Activated T-helper 1 cell treated with anti-CD3 and anti-CD28 coated beads, Interleukin-12 subunit alpha, Interleukin-12 subunit beta, Interleukin-2, Interleukin-4 antibody, amounts not matched to agents 30 ng/mL and 10 ng/mL and 1 ng/mL, durations not matched to agents 14 hours and 24 hours and 36 hours (primary cell): ENCODE measurements at regions of chr6 and their contacts with region 1.

Region 1: DNA sequence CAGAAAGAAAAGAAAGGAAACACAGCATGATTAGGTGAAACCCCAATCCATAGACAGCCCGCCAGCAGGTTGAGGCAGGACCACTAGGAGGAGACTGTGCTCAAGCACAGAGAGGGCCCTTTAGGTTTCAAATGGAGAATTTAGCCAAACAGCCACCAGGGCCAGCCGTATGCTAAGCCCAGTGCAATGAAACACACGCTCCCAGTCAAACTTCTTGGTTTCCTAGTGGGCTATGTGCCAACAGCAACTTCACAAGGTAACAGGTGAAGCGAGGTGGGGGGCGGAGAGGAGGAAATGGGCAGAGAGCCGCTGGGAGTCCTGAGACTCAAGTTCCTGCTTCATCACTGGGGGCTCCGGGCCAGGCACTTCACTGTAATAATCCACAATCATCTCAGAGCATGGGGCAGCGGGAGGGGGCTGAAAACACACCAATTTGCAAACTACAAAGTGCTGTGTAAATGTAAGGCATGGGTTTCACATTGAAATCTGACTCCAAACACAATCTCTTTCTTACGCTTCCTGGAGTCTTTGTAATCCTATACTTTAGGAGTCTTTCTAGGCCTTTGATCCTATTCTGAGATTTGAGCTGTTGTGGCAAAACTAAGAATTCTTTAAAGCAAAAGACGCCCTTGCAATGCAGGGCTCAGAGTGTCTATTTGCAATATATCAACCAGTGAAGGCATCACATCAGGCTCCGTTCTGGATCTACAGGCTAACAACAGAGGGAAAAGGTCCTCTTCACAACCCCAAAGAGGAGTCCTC is 117.3 kb downstream of the OPRM1 start:
- DNase-seq: peak; percentile 26
- H3K4me3 Mint-ChIP-seq: peak overlapping the region; percentile 43
- H3K27ac Mint-ChIP-seq: peak overlapping the region; percentile 84
- H3K4me1 Mint-ChIP-seq: peaks cover 26% of the 10 kb centered on the region
- H3K27me3 Mint-ChIP-seq: peaks cover 5% of the 10 kb centered on the region

Region 2: GRCh38 chr6:154206996-154207395 is 50.7 kb after region 1 on chr6:
- intact Hi-C with region 1: no loop called
- DNase-seq: no peak
- H3K4me3 Mint-ChIP-seq: no peak overlapping the region
- H3K27ac Mint-ChIP-seq: no peak overlapping the region
- H3K4me1 Mint-ChIP-seq: peaks cover 6% of the 10 kb centered on the region
- H3K27me3 Mint-ChIP-seq: no peaks in the 10 kb centered on the region

Region 3: GRCh38 chr6:154247119-154247861 is 91.0 kb after region 1 on chr6:
- intact Hi-C with region 1: loop called (anchors 1 kb)
- DNase-seq: no peak
- H3K4me3 Mint-ChIP-seq: peak overlapping the region; percentile 85
- H3K27ac Mint-ChIP-seq: peak overlapping the region; percentile 76
- H3K4me1 Mint-ChIP-seq: peaks cover 87% of the 10 kb centered on the region
- H3K27me3 Mint-ChIP-seq: no peaks in the 10 kb centered on the region

Region 4: DNA sequence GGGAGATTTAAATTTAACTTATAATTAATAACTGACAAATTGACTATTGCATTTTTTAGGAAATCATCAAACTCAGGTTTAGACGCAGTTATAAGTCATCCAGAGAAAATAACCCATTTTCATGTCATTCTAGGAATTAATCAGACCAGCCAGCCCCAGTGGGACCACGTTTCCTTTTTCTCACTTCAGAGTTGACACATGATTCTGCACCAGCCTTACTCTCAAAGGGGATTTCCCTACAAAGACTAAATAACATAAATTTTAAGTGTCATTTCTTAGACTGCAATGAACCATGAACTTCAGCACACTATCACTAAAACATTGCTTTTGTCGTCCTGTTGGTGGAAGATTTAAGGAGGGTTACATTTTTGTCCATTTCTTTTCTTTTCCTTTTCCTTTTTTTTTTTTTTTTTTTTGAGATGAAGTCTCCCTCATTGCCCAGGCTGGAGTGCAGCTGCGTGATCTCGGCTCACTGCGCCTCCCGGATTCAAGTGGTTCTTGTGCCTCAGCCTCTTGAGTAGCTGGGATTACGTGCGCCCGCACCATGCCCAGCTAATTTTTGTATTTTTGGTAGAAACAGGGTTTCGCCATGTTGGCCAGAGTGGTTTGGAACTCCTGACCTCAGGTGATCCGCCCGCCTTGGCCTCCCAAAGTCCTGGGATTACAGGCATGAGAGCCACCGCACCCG is 196.7 kb after region 1 on chr6:
- intact Hi-C with region 1: loop called (anchors 2 kb)
- DNase-seq: no peak
- H3K4me3 Mint-ChIP-seq: no peak overlapping the region
- H3K27ac Mint-ChIP-seq: no peak overlapping the region
- H3K4me1 Mint-ChIP-seq: peaks cover 20% of the 10 kb centered on the region
- H3K27me3 Mint-ChIP-seq: peaks cover 19% of the 10 kb centered on the region

Region 5: DNA sequence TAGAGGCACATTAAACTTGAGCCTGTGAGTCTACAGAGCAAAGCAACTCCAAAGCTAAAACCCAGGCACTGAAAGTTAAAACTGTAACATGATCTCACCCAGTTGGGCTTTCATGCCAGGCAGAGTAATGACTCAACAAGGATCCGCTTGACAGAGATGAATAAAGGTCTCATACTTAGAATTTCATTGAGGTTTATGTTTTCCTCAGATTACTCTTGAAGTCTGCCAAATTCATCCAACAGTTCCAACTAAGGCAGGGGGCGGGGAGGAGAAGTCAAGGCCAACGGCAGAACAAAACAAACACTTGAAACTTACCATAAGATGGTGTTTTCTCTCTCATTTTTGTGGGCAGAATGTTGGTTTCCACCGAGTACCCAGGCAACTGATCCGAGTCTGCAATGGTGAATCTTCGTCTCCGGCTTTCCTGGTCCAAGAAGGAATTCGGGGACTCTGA is 254.3 kb after region 1 on chr6:
- intact Hi-C with region 1: loop called (anchors 1 kb)
- DNase-seq: no peak
- H3K4me3 Mint-ChIP-seq: no peak overlapping the region
- H3K27ac Mint-ChIP-seq: peak overlapping the region; percentile 15
- H3K4me1 Mint-ChIP-seq: peaks cover 6% of the 10 kb centered on the region
- H3K27me3 Mint-ChIP-seq: peaks cover 6% of the 10 kb centered on the region

Region 6: GRCh38 chr6:154606457-154606856 is 450.1 kb after region 1 on chr6:
- intact Hi-C with region 1: loop called (anchors 2 kb)
- DNase-seq: peak; percentile 66
- H3K4me3 Mint-ChIP-seq: peak overlapping the region; percentile 65
- H3K27ac Mint-ChIP-seq: peak overlapping the region; percentile 86
- H3K4me1 Mint-ChIP-seq: peaks cover 24% of the 10 kb centered on the region
- H3K27me3 Mint-ChIP-seq: peaks cover 3% of the 10 kb centered on the region

Region 7: GRCh38 chr6:154733012-154733625 is 576.8 kb after region 1 on chr6 and contains the start of gene SCAF8:
- intact Hi-C with region 1: loop called (anchors 1 kb)
- DNase-seq: peak; percentile 85
- H3K4me3 Mint-ChIP-seq: peak within 1 kb of the TSS; percentile 97
- H3K27ac Mint-ChIP-seq: peak within 1 kb of the TSS; percentile 96
- H3K4me1 Mint-ChIP-seq: peaks cover 33% of the 10 kb centered on the region
- H3K27me3 Mint-ChIP-seq: peaks cover 4% of the 10 kb centered on the region
- total RNA-seq, gene SCAF8: 37.7 and 40.9 TPM in 2 replicates